ENCODE measurements at regions of chr5 and their contacts with region 1.

Region 1: DNA sequence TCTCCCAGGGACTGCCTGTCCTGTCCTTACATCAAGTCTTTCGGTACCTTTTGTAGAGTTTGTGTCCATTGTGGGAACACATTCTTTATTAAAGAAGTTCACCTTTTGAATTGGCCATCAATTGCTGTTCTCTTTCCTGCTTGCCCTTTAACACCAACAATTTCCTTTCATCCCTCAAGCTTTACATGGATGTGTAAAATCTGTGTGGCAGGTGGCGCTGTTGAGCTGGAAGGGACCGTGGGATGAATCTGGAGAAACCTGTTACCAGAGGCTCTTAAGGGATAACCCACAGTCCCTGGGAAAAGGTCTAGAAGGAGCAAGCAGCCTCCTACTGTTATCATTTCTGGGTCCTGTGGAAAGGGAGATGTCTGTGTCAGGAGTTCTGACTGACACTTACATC is 7.9 kb upstream of the ZFP62 start:
- DNase-seq: peak in 1 of 2 experiments; percentile 93
- H3K4me3 ChIP-seq: no peak overlapping the region
- H3K27ac ChIP-seq: no peak overlapping the region
- H3K4me1 ChIP-seq: no peaks in the 10 kb centered on the region; a peak in 1 of 7 replicates
- H3K27me3 ChIP-seq: no peaks in the 10 kb centered on the region
- CTCF ChIP-seq: peak; percentile 59 to 89 (median 86)
- EP300 ChIP-seq: no peak
- POLR2A ChIP-seq: no peak
- RAD21 ChIP-seq: peak; percentile 93

Region 2: GRCh38 chr5:180639741-180640610 is 229.0 kb before region 1 on chr5:
- CTCF ChIA-PET with region 1: no interaction called
- POLR2A ChIA-PET with region 1: no interaction called
- DNase-seq: peak in 1 of 2 experiments; percentile 38
- H3K4me3 ChIP-seq: no peak overlapping the region
- H3K27ac ChIP-seq: no peak overlapping the region
- H3K4me1 ChIP-seq: no peaks in the 10 kb centered on the region
- H3K27me3 ChIP-seq: no peaks in the 10 kb centered on the region
- CTCF ChIP-seq: no peak
- EP300 ChIP-seq: no peak
- POLR2A ChIP-seq: no peak
- RAD21 ChIP-seq: no peak

Region 3: GRCh38 chr5:180920710-180921109 is 51.8 kb after region 1 on chr5:
- CTCF ChIA-PET with region 1: no interaction called
- POLR2A ChIA-PET with region 1: no interaction called
- DNase-seq: no peak
- H3K4me3 ChIP-seq: no peak overlapping the region
- H3K27ac ChIP-seq: no peak overlapping the region
- H3K4me1 ChIP-seq: no peaks in the 10 kb centered on the region
- H3K27me3 ChIP-seq: no peaks in the 10 kb centered on the region
- CTCF ChIP-seq: no peak
- EP300 ChIP-seq: no peak
- POLR2A ChIP-seq: no peak
- RAD21 ChIP-seq: no peak

Region 4: DNA sequence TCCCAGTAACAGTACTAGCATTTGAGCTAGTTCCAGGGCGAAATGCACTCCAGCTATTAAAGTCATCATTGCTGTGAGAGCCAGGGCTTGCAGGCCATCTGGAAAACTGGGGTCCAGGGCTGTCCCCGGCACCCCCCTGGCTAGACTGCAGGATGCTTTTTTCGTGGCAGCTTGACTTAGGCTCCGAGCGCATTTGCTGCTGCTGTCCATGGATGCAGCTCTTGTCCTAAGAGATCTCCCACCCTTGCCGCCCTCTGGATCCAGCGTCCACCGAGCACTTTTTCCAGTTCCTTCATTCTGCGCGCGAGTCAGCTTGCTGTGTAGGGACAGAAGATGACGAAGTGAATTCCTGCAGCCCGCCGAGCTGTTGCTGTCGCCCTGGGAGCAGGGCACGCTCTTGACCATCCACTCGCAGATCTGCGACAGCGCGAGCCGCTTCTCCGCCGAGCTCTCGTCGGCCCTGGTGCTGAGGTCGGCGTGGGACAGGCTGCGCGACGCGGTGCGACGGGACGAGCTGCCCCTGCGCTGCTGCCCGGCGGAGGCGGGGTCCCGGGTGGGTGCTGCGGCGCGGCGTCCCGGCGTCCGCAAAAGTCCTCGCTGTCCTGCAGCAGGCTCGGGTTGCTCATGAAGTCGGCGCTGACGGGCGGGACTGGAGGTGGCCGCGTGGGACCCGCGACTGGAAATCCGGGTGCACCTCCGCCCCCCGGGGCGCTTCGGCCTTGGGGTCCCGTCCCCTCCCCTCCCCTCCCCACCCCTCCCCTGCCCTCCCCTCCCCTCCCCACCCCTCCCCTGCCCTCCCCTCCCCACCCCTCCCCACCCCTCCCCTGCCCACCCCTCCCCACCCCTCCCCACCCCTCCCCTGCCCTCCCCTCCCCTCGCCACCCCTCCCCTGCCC is 231.4 kb after region 1 on chr5:
- CTCF ChIA-PET with region 1: interaction called, 10 read pairs
- POLR2A ChIA-PET with region 1: no interaction called
- DNase-seq: peak in 1 of 2 experiments; percentile 59
- H3K4me3 ChIP-seq: peak overlapping the region in 3 of 4 experiments; percentile 3 to 56 (median 32); a peak in 7 of 8 replicates
- H3K27ac ChIP-seq: no peak overlapping the region
- H3K4me1 ChIP-seq: peaks cover 0 to 7% (median 0%) of the 10 kb centered on the region in 4 experiments; a peak in 2 of 7 replicates
- H3K27me3 ChIP-seq: peaks cover 18 to 32% (median 27%) of the 10 kb centered on the region in 4 experiments
- CTCF ChIP-seq: no peak
- EP300 ChIP-seq: no peak
- POLR2A ChIP-seq: no peak
- RAD21 ChIP-seq: no peak